MCF 10A (cell line): ENCODE measurements at regions of chr14 and their contacts with region 1.

Region 1: GRCh38 chr14:67240978-67241414 is 239 bp upstream of the PALS1 start:
- DNase-seq: peak; percentile 95
- H3K4me3 Mint-ChIP-seq: peak overlapping the region; percentile 80
- H3K27ac Mint-ChIP-seq: peak overlapping the region; percentile 76
- H3K4me1 Mint-ChIP-seq: peaks cover 15% of the 10 kb centered on the region
- H3K27me3 Mint-ChIP-seq: no peaks in the 10 kb centered on the region
- CTCF ChIP-seq: no peak

Region 2: DNA sequence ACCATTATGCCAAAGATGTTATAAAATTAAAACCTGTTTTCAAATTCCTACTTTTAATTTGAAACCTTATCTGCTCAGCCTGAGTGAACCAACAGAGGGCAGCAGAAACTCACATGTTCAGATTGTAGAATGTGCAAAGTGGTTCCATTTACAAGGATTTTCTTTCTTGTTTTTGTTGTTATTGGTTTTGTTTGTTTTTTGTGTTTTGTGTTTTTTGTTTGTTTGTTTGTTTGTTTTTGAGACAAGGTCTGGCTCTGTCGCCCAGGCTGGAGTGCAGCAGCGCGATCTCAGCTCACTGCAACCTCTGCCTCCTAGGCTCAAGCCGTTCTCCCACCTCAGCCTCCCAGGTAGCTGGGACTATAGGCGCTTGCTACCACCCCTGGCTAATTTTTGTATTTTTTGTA is 74.5 kb before region 1 on chr14:
- CTCF ChIA-PET with region 1: no interaction called
- POLR2A ChIA-PET with region 1: no interaction called
- intact Hi-C with region 1: loop called (anchors 2 kb)
- DNase-seq: peak; percentile 62
- H3K4me3 Mint-ChIP-seq: no peak overlapping the region
- H3K27ac Mint-ChIP-seq: no peak overlapping the region
- H3K4me1 Mint-ChIP-seq: peaks cover 8% of the 10 kb centered on the region
- H3K27me3 Mint-ChIP-seq: no peaks in the 10 kb centered on the region
- CTCF ChIP-seq: peak; percentile 79

Region 3: GRCh38 chr14:67228325-67228984 is 12.5 kb before region 1 on chr14:
- CTCF ChIA-PET with region 1: interaction called, 3 read pairs
- POLR2A ChIA-PET with region 1: interaction called, 23 read pairs
- intact Hi-C with region 1: no loop called
- DNase-seq: peak; percentile 36
- H3K4me3 Mint-ChIP-seq: peak overlapping the region; percentile 60
- H3K27ac Mint-ChIP-seq: peak overlapping the region; percentile 79
- H3K4me1 Mint-ChIP-seq: peaks cover 4% of the 10 kb centered on the region
- H3K27me3 Mint-ChIP-seq: no peaks in the 10 kb centered on the region
- CTCF ChIP-seq: no peak

Region 4: DNA sequence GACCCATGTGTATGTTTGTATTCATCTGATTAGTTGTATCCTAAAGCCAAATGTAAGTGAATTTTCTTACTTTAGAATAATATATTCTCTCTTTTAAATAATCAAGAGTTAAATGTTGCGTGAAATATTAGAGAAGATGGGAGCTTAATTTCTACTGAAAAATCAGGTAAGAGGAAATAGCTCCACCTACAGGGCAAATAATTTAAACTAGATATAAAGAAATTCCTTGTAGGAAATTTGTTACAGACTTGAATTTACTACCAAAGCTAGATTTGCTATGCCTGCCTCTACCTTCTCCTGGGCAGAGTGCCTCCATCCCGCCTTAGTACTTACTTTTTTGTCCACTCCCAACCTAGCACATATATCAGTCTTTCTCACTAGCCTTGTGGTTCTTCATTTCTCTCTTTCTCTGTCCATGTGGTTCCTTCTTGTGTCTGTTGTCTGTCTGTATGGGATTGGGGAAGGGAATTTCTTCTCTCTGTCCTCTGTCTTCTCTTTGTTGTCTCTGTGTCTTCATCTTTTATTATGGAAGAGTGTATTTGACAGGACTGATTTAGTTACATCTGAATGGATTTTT is 45.0 kb after region 1 on chr14:
- CTCF ChIA-PET with region 1: interaction called, 4 read pairs
- POLR2A ChIA-PET with region 1: interaction called, 12 read pairs
- intact Hi-C with region 1: no loop called
- DNase-seq: peak; percentile 45
- H3K4me3 Mint-ChIP-seq: no peak overlapping the region
- H3K27ac Mint-ChIP-seq: no peak overlapping the region
- H3K4me1 Mint-ChIP-seq: peaks cover 6% of the 10 kb centered on the region
- H3K27me3 Mint-ChIP-seq: no peaks in the 10 kb centered on the region
- CTCF ChIP-seq: peak; percentile 55